ENCODE measurements at regions of chr22 and their contacts with region 1.

Region 1: DNA sequence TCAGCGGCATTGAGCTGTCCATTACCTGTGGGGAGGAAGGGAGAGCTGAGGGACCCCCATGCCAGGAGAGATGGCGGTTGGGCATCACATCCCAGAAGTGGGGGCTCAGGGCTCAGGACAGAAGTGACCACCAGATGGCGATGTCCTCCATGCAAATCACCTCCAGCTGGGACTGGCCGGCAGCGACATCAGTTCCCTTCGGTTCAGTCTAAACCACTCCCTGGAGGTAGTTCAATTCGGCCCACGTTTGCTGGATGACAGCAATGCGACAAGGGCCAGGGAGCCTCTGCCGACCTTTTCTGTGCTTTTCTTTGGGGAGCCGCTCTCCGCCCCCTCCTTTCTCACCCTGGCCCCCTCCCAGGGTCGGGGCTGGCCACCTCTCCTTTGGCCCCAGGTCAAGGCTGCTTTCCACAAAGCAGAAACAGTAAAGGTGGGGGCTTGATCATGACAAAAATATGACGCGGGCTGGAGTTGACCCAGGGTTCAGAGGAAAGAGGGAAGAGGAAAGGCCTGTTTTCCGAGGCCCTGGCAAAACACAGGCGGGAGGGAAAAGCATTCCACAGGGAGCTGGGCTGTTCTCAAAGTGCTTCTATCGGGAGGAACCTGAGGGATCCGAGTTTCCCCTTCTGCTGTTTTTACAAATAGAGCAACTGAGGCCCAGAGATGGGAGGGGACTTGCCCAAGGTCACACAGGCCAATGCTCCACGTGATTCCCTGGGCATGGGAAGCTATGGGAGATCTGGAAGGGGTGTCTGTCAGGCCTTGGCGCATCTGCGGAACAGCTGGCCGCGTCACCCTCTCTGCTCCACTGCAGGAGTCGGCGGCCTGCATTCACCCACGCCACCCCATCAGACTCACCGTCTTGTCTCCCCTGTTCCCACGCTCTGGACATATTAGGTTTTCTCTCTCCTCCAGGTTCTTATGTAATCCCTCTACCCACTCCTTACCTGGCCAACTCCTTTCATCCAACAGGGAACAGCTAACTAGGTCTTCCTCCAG is 54.7 kb downstream of the FBXO7 start:
- DNase-seq: peak; percentile 45
- H3K4me3 ChIP-seq: no peak overlapping the region
- CTCF ChIP-seq: peak; percentile 89

Region 2: DNA sequence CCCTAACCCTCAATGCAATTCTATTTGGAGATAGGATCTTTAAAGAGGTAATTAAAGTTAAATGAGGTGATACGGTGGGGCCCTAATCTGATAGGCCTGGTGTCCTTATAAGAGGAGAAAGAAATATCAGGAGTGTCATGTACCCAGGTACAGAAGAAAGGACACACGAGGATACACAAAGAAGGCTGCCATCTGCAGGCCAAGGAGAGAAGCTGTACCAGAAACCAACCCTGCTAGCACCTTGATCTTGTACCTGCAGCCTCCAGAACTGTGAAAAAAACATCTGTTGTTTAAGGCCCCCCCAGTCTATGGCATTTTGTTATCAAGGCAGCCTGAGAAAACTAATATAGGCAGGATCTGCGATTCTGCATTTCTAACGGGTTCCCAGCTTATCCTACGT is 10.4 kb before region 1 on chr22:
- CTCF ChIA-PET with region 1: interaction called, 62 read pairs
- POLR2A ChIA-PET with region 1: no interaction called
- DNase-seq: no peak
- H3K4me3 ChIP-seq: no peak overlapping the region
- CTCF ChIP-seq: peak; percentile 1

Region 3: DNA sequence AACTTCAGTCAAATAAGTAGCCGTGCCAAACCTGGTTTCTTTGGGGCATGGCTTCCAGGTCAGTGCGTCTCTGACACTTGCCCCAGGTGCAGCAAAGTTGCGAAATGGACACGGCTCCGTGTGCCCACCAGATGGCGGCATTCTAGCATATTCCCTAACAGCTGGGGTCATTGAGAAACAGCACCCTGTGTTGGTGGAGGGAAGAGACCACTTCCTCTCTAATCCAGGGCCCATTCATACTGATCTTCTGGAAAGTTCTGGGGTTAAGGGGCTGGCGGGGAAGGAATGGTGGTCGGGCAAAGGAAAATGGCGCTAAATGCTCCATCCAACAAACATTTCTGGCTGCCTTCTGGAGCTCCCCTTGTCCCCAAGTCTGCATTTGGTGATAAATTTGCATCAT is 131.0 kb after region 1 on chr22:
- CTCF ChIA-PET with region 1: interaction called, 36 read pairs
- POLR2A ChIA-PET with region 1: no interaction called
- DNase-seq: no peak
- H3K4me3 ChIP-seq: no peak overlapping the region
- CTCF ChIP-seq: peak; percentile 80

Region 4: GRCh38 chr22:32823024-32823730 is 293.9 kb after region 1 on chr22:
- CTCF ChIA-PET with region 1: interaction called, 73 read pairs
- POLR2A ChIA-PET with region 1: no interaction called
- DNase-seq: no peak
- H3K4me3 ChIP-seq: no peak overlapping the region
- CTCF ChIP-seq: peak; percentile 45

Region 5: DNA sequence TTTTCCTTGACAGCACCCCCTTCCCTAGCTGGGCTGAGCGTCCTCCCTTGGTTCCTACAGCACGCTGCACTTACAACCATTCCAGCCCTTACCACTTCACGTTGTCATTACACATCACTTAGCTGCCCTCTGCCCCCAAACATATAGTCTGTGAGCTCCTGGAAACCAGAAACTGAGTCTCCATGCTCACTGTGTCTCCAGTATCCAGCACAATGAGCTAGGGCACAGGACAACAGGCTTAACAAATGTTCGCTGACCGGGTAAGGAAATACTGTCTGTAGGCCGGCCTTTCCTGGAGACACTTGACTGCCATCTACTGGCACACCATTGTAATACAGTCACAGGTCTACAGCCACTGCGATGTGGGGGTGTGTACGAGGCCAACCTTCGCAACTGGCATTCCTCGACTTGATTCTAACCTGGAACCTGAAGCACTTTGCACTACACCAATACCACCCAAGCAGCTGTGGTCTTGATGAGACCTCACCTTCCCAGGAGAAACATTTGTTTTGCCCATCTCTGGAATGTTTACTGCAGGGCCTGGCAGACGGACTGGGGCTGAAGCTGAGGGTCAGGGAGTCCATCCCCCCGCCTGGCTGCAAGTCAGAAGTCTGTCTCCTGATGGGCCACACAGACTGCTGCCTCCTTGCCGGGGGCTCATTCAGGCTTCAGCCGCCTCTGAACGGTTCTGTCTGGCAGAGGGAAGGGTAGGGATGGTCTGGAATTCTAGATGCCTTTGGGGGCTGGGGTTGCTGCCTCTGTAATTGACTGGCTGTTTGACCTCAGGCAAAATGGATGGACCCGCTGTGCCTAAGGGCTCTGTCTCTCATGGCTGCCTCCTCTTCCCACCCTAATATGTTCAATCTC is 456.8 kb after region 1 on chr22:
- CTCF ChIA-PET with region 1: interaction called, 90 read pairs
- POLR2A ChIA-PET with region 1: no interaction called
- DNase-seq: peak; percentile 21
- H3K4me3 ChIP-seq: no peak overlapping the region
- CTCF ChIP-seq: peak; percentile 86

Region 6: DNA sequence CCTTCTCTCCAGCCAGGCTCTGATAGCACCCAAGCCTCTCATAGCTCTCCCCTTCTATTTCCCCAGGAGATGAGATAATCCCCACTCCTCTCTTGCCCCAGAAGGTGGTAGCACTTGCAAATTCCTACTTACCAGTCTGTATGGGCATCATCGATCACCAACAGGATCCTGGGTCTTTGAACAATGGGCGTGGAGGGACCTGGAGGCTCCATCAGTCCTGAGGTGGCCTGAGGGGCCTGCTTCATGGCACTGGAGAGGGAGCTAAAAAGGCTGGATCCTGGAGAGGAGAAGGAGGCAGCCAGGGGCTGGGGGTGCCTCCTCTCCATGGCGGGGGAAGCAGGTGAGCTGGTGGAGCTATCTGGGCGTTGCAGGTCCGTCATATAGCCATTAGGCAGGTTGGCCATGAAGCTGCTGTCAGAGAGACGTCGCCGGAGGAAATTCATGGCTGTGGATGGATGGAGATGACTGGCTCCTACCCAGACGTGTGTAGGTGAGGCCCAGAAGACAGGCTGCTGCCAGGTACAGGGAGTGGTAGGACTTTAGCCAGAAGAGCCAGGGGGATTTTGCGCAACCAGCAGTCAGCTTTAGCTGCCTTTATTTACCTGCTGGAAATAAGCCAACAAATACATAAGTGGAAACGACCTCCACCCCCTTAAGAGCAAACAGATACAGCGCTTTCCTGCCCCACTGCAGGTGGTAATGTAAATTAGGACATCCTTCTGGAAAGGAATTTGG is 477.1 kb after region 1 on chr22:
- CTCF ChIA-PET with region 1: interaction called, 202 read pairs
- POLR2A ChIA-PET with region 1: no interaction called
- DNase-seq: no peak
- H3K4me3 ChIP-seq: no peak overlapping the region
- CTCF ChIP-seq: no peak

Measured in AG04449 (cell line).